Activated CD4-positive, alpha-beta memory T cell treated with anti-CD3 and anti-CD28 coated beads for 36 hours (primary cell): ENCODE measurements at regions of chr9 and their contacts with region 1.

Region 1: GRCh38 chr9:89549031-89549644 is 51.2 kb upstream of the SEMA4D start:
- DNase-seq: peak; percentile 92
- H3K4me3 Mint-ChIP-seq: no peak overlapping the region
- H3K27ac Mint-ChIP-seq: peak overlapping the region; percentile 67
- H3K4me1 Mint-ChIP-seq: peaks cover 19% of the 10 kb centered on the region
- H3K27me3 Mint-ChIP-seq: no peaks in the 10 kb centered on the region

Region 2: GRCh38 chr9:89410641-89411350 is 138.3 kb before region 1 on chr9:
- CTCF ChIA-PET with region 1: interaction called, 87 read pairs
- POLR2A ChIA-PET with region 1: interaction called, 10 read pairs
- intact Hi-C with region 1: loop called (anchors 1 kb)
- DNase-seq: peak; percentile 86
- H3K4me3 Mint-ChIP-seq: peak overlapping the region; percentile 70
- H3K27ac Mint-ChIP-seq: peak overlapping the region; percentile 91
- H3K4me1 Mint-ChIP-seq: peaks cover 91% of the 10 kb centered on the region
- H3K27me3 Mint-ChIP-seq: no peaks in the 10 kb centered on the region

Region 3: DNA sequence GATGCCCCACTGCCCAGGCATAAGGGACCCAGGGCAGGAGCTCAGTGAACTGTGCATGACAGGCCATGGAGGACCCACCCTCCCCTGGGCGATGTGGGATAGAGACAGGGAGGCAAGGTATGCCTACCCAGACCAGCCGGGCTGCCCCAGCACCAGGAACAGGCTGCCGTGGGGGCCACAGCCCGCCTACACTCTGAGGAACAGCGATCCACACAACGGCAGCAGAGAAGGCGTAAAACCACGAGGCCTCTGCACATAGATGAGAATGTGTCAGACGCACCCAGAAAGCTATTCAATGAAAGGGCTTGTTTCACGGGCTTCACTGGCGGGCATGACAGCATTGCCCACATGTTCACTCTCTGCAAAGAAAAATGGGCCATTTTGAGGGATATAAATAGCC is 100.8 kb before region 1 on chr9:
- CTCF ChIA-PET with region 1: interaction called, 13 read pairs
- POLR2A ChIA-PET with region 1: no interaction called
- intact Hi-C with region 1: no loop called
- DNase-seq: peak; percentile 69
- H3K4me3 Mint-ChIP-seq: peak overlapping the region; percentile 17
- H3K27ac Mint-ChIP-seq: peak overlapping the region; percentile 68
- H3K4me1 Mint-ChIP-seq: peaks cover 93% of the 10 kb centered on the region
- H3K27me3 Mint-ChIP-seq: no peaks in the 10 kb centered on the region

Region 4: GRCh38 chr9:89466451-89467277 is 82.5 kb before region 1 on chr9:
- CTCF ChIA-PET with region 1: interaction called, 13 read pairs
- POLR2A ChIA-PET with region 1: interaction called, 4 read pairs
- intact Hi-C with region 1: no loop called
- DNase-seq: peak; percentile 82
- H3K4me3 Mint-ChIP-seq: peak overlapping the region; percentile 55
- H3K27ac Mint-ChIP-seq: peak overlapping the region; percentile 95
- H3K4me1 Mint-ChIP-seq: peaks cover 97% of the 10 kb centered on the region
- H3K27me3 Mint-ChIP-seq: no peaks in the 10 kb centered on the region

Region 5: DNA sequence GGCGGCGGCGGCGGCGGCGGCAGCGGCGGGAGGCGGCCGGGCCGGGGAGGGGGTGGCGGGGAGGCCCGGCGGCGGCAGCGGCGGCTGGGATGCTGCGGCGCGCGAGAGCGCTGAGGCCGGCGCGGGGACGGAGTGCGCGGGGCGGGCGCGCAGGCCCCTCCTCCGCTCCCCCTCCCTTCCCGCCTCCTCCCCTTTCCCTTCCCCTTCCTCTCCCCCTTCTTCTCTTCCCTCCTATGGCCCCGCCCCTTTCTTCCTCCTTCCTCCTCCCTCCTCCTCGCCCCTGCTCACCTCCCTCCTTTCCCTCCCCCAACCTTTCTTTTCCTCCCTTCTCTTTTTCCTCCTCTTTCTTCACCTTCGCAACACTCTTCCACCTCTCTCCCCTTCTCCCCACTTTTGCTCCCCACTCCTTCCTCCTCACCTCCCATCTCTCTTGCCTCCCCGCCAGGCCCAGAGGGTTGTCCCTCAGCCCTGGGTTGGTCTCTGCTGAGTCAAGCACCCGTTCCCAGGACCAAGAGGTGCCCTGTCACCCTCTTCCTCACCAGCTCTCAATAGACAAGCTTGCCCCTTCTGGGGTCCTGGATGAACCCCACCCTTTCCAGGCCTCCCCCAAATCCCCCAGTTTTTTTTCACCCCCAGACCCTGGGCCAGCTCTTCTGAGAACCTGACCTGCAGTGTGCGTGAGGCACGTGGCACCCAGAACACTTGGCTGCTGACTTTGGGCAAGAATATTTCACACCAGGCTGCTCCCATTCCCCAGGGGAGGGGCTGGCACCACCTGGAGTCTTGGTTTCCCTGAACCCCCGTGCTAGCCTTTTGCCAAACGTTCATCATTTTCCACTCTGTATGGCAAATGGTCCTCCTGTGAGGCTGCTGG is 50.9 kb before region 1 on chr9 and contains the start of gene SEMA4D:
- CTCF ChIA-PET with region 1: interaction called, 19 read pairs
- POLR2A ChIA-PET with region 1: interaction called, 4 read pairs
- intact Hi-C with region 1: no loop called
- DNase-seq: peak; percentile 81
- H3K4me3 Mint-ChIP-seq: peak within 1 kb of the TSS; percentile 81
- H3K27ac Mint-ChIP-seq: peak within 1 kb of the TSS; percentile 90
- H3K4me1 Mint-ChIP-seq: peaks cover 73% of the 10 kb centered on the region
- H3K27me3 Mint-ChIP-seq: no peaks in the 10 kb centered on the region
- total RNA-seq, gene SEMA4D: 159 to 161 TPM

Region 6: DNA sequence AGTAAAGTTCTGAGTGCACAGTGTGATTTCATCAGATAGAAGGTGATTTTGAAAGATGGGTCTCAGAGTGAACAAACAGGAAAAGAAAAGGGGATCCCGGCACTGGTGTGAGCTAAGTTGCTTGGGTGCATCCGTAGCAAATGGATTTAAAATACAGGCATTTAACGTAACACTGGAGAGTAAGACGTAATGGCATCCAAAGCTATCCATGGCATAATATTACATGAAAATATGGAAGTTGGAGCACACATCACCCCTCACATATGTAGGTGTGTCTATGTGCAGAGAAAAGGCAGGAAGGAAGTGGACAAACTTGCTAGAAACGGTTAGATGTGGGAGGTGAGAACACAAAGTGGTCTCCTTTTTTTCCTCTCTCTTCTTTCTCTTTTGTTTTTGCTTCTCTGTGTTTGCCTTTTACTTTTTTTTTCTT is 13.0 kb before region 1 on chr9:
- CTCF ChIA-PET with region 1: interaction called, 39 read pairs
- POLR2A ChIA-PET with region 1: interaction called, 4 read pairs
- intact Hi-C with region 1: no loop called
- DNase-seq: no peak
- H3K4me3 Mint-ChIP-seq: peak overlapping the region; percentile 61
- H3K27ac Mint-ChIP-seq: peak overlapping the region; percentile 90
- H3K4me1 Mint-ChIP-seq: peaks cover 81% of the 10 kb centered on the region
- H3K27me3 Mint-ChIP-seq: no peaks in the 10 kb centered on the region